PC-9 (cell line): ENCODE measurements at regions of chr20 and their contacts with region 1.

Region 1: DNA sequence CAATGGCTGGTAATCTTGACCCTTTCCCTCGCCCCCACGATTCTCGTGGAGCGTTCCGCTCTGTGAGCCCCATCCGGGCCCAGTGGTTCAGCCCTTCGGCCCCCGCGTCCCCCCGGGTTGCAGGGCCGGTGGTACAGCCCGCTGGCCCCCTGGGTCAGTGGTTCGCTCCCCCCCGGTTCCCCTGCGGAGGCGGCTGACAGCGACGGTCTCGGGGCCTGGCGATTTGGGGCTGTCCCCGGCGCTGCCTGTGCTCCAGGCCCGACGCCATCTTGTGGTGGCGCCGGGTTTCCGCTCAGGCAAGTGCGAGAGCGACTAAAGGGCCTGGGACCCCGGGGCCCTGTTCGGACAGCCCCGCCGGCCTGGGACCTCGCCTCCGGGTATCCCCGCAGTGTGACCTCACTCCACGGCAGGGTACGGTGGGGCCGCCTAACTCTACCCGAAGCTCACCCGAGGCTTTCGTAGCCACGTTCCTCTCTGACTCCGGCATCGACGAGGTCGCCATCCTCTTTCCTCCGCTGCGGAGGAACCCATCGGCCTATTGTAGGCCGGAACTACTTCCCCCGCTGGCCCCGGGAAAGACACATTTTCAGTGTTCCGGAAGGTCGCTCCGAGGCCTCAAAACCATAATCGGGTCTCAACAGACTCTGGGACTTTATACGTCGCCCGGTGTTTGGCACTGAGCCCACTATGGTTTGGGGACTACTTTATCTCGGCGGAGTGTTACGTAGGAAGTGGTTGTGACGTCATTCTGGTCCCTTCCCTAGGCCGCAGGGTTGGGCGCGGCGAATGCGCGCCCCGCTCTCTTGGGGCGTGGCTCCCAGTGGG is at the start of gene ZNF335:
- DNase-seq: peak; percentile 91 to 98
- H3K4me3 ChIP-seq: peak within 1 kb of the TSS; percentile 79
- H3K27ac ChIP-seq: peak within 1 kb of the TSS; percentile 98
- H3K4me1 ChIP-seq: peaks cover 24% of the 10 kb centered on the region
- H3K27me3 ChIP-seq: no peaks in the 10 kb centered on the region
- CTCF ChIP-seq: peak; percentile 60
- total RNA-seq, gene ZNF335: 14.1 and 16.3 TPM in 2 replicates

Region 2: GRCh38 chr20:45993197-45993951 is 21.5 kb after region 1 on chr20:
- CTCF ChIA-PET with region 1: interaction called, 6 read pairs
- POLR2A ChIA-PET with region 1: no interaction called
- intact Hi-C with region 1: loop called (anchors 1 kb)
- DNase-seq: peak; percentile 95 to 99
- H3K4me3 ChIP-seq: no peak overlapping the region; the same call in 1 of the 2 replicates
- H3K27ac ChIP-seq: peak overlapping the region; percentile 66
- H3K4me1 ChIP-seq: peaks cover 50% of the 10 kb centered on the region
- H3K27me3 ChIP-seq: no peaks in the 10 kb centered on the region
- CTCF ChIP-seq: no peak

Region 3: GRCh38 chr20:46013826-46014516 is 42.1 kb after region 1 on chr20:
- CTCF ChIA-PET with region 1: interaction called, 8 read pairs
- POLR2A ChIA-PET with region 1: no interaction called
- intact Hi-C with region 1: loop called (anchors 5 kb)
- DNase-seq: peak in 1 of 2 experiments; percentile 71
- H3K4me3 ChIP-seq: no peak overlapping the region
- H3K27ac ChIP-seq: no peak overlapping the region
- H3K4me1 ChIP-seq: peaks cover 3% of the 10 kb centered on the region; the same call in 1 of the 2 replicates
- H3K27me3 ChIP-seq: no peaks in the 10 kb centered on the region
- CTCF ChIP-seq: peak; percentile 96

Region 4: GRCh38 chr20:46089417-46090388 is 117.8 kb after region 1 on chr20 and contains the start of gene NCOA5:
- CTCF ChIA-PET with region 1: interaction called, 3 read pairs
- POLR2A ChIA-PET with region 1: interaction called, 3 read pairs
- intact Hi-C with region 1: loop called (anchors 1 kb)
- DNase-seq: peak; percentile 86 to 97
- H3K4me3 ChIP-seq: peak within 1 kb of the TSS; percentile 85
- H3K27ac ChIP-seq: peak within 1 kb of the TSS; percentile 83
- H3K4me1 ChIP-seq: peaks cover 43% of the 10 kb centered on the region
- H3K27me3 ChIP-seq: no peaks in the 10 kb centered on the region
- CTCF ChIP-seq: no peak; the same call in 1 of the 2 replicates
- total RNA-seq, gene NCOA5: 15.8 and 28.1 TPM in 2 replicates

Region 5: DNA sequence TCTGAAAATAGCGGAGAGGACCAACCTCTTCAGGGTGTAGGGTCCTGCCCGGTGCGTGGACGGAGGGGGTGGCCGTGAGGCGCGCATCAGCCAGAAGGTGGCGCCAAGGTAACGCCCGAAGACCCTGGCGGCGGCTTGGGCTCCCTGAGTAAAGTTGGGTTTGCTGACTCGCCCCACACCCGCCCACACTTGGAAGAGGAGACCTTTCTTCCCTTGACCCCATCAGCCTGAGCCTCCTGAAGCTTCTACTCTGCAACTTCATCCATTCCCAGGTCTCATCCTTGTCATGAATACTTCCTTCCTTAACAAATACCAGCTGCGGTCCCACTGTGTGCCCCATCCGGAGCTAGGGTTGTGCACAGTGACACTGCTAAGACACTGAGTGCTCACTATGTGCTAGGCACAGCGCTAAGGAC is 160.8 kb after region 1 on chr20:
- CTCF ChIA-PET with region 1: no interaction called
- POLR2A ChIA-PET with region 1: no interaction called
- intact Hi-C with region 1: no loop called
- DNase-seq: peak in 1 of 2 experiments; percentile 72
- H3K4me3 ChIP-seq: no peak overlapping the region
- H3K27ac ChIP-seq: no peak overlapping the region
- H3K4me1 ChIP-seq: peaks cover 3% of the 10 kb centered on the region
- H3K27me3 ChIP-seq: peaks cover 90% of the 10 kb centered on the region
- CTCF ChIP-seq: peak; percentile 90

Region 6: GRCh38 chr20:46406199-46406985 is 434.5 kb after region 1 on chr20 and contains the start of gene ELMO2:
- CTCF ChIA-PET with region 1: no interaction called
- POLR2A ChIA-PET with region 1: no interaction called
- intact Hi-C with region 1: loop called (anchors 1 kb)
- DNase-seq: peak; percentile 93 to 96
- H3K4me3 ChIP-seq: peak within 1 kb of the TSS; percentile 93
- H3K27ac ChIP-seq: no peak within 1 kb of the TSS
- H3K4me1 ChIP-seq: peaks cover 29% of the 10 kb centered on the region
- H3K27me3 ChIP-seq: no peaks in the 10 kb centered on the region
- CTCF ChIP-seq: peak; percentile 49
- total RNA-seq, gene ELMO2: 29.4 and 32.1 TPM in 2 replicates